ENCODE measurements at regions of chr1 and their contacts with region 1.

Region 1: GRCh38 chr1:15803354-15803753 is 4.1 kb downstream of the UQCRHL start:
- DNase-seq: no peak
- H3K4me3 ChIP-seq: no peak overlapping the region
- H3K27ac ChIP-seq: no peak overlapping the region
- H3K4me1 ChIP-seq: peaks cover 37% of the 10 kb centered on the region
- H3K27me3 ChIP-seq: no peaks in the 10 kb centered on the region
- CTCF ChIP-seq: peak; percentile 37 to 49

Region 2: DNA sequence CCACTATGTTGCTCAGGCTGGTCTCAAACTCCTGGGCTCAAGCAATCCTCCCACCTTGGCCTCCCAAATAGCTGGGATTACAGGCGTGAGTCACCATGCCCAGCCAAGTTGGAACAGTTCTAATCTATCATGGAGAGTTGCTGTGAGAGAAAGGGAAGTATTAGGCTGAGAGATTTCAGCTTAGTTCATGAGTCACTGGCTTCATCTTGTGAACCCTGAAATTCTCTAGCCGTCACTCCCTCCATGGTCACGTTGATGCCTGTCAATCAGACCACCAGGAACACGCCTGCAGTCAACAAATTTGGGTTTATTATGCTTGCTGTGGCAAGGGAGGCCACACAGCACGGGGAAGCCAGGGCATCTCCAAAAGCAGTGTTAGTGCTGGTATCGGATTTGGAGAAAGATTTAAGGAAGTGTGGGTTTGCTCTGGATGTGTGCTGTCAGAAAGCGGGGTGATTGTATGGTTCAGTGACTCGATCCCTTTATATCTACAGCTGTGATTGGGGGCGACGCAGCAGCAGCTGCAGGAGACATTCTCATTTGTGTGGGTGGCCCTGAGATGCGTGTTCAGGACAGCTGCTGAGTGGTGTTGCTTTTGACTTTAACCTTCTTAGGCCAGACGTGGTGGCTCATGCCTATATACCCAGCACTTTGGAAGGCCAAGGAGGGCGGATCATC is 14.6 kb before region 1 on chr1:
- CTCF ChIA-PET with region 1: interaction called, 3 read pairs
- dilution Hi-C with region 1: no loop called
- in situ Hi-C with region 1: no loop called
- intact Hi-C with region 1: loop called (anchors 1 kb)
- DNase-seq: peak; percentile 76
- H3K4me3 ChIP-seq: no peak overlapping the region
- H3K27ac ChIP-seq: peak overlapping the region; percentile 50
- H3K4me1 ChIP-seq: peaks cover 26% of the 10 kb centered on the region
- H3K27me3 ChIP-seq: no peaks in the 10 kb centered on the region
- CTCF ChIP-seq: no peak

Region 3: DNA sequence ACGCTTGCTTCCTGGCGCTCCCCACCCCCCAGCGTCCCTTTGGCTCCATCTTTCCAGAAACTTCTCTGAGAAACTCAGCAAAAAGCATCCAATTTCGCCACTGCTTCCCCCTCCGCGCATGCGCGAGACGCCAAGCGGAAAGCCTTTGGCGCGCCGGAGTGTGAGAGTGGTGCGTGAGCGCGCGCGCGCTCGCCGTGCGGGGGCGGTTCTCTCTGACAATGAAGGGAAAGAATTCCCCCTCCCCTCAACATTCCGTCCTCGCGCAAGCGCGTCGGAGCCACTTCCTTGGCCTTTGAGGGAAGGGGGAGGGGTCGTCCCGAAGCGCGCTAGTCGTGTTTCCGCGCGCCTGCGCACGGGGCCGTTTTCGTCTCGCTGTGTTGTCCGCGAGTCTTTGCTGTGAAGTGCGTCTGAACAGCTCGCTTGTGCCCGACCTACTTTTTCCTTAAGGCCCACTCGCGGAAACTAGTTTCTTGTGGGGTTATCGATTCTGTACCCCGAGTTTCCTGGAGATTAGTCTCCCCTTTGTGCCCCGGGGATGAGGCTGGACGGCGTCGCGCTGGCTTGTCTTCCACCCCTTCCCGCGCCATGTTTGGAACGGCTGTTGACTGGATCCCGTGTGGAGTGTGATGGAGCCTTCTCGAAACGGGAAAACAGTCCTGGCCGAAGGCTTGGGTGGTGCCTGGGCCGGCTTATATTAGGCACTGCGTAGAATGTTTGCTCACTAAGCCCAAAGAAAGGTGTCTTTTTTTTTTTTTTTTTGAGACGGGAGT is 32.6 kb after region 1 on chr1:
- CTCF ChIA-PET with region 1: no interaction called
- dilution Hi-C with region 1: no loop called
- in situ Hi-C with region 1: no loop called
- intact Hi-C with region 1: loop called (anchors 2 kb)
- DNase-seq: peak; percentile 99
- H3K4me3 ChIP-seq: peak overlapping the region; percentile 59 to 87 (median 65)
- H3K27ac ChIP-seq: peak overlapping the region; percentile 91
- H3K4me1 ChIP-seq: peaks cover 27% of the 10 kb centered on the region
- H3K27me3 ChIP-seq: no peaks in the 10 kb centered on the region
- CTCF ChIP-seq: no peak

Region 4: GRCh38 chr1:15866721-15867201 is 63.4 kb after region 1 on chr1:
- CTCF ChIA-PET with region 1: no interaction called
- dilution Hi-C with region 1: loop called (anchors 5 kb)
- in situ Hi-C with region 1: no loop called
- intact Hi-C with region 1: no loop called
- DNase-seq: peak; percentile 16
- H3K4me3 ChIP-seq: no peak overlapping the region
- H3K27ac ChIP-seq: no peak overlapping the region
- H3K4me1 ChIP-seq: no peaks in the 10 kb centered on the region
- H3K27me3 ChIP-seq: no peaks in the 10 kb centered on the region
- CTCF ChIP-seq: no peak

Region 5: DNA sequence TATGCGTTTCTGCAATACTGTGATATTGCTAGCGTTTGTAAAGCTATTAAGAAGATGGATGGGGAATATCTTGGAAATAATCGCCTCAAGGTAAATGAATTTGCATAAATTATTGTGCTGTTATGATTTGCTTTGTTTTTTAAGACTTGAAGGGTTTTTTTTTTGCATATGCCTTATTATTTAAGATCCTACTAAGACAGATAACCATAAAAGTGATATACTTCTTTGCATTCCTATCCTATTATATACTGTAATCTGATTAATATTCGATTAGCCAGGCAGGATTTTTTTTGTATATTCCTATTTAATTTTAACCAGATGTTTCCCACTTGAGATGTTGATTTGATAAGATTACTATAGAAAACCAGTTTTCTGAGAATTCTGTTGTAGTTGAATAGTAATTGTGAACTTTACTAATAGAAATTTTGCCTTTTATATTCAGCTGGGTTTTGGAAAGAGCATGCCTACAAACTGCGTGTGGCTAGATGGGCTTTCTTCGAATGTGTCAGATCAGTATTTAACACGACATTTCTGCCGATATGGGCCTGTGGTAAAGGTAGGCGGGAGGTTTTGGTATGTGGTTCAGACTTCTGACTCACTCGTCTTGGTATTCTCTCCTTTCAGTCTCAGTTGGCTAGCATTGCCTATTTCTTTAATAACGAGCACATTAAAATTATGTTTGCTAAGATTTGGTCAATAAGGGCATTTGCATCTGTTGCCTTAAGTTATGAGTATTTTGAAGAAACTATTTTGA is 115.8 kb after region 1 on chr1:
- CTCF ChIA-PET with region 1: no interaction called
- dilution Hi-C with region 1: no loop called
- in situ Hi-C with region 1: loop called (anchors 10 to 25 kb)
- intact Hi-C with region 1: loop called (anchors 5 kb)
- DNase-seq: peak; percentile 91
- H3K4me3 ChIP-seq: peak overlapping the region in 1 of 3 experiments; percentile 14
- H3K27ac ChIP-seq: peak overlapping the region; percentile 88
- H3K4me1 ChIP-seq: peaks cover 53% of the 10 kb centered on the region
- H3K27me3 ChIP-seq: no peaks in the 10 kb centered on the region
- CTCF ChIP-seq: no peak

Region 6: GRCh38 chr1:15994590-15995351 is 191.4 kb after region 1 on chr1:
- CTCF ChIA-PET with region 1: interaction called, 8 read pairs
- dilution Hi-C with region 1: no loop called
- in situ Hi-C with region 1: no loop called
- intact Hi-C with region 1: loop called (anchors 1 kb)
- DNase-seq: peak; percentile 40
- H3K4me3 ChIP-seq: no peak overlapping the region
- H3K27ac ChIP-seq: no peak overlapping the region
- H3K4me1 ChIP-seq: no peaks in the 10 kb centered on the region
- H3K27me3 ChIP-seq: no peaks in the 10 kb centered on the region
- CTCF ChIP-seq: peak; percentile 68 to 84